Natural killer cell (primary cell): ENCODE measurements at regions of chr2 and their contacts with region 1.

Region 1: DNA sequence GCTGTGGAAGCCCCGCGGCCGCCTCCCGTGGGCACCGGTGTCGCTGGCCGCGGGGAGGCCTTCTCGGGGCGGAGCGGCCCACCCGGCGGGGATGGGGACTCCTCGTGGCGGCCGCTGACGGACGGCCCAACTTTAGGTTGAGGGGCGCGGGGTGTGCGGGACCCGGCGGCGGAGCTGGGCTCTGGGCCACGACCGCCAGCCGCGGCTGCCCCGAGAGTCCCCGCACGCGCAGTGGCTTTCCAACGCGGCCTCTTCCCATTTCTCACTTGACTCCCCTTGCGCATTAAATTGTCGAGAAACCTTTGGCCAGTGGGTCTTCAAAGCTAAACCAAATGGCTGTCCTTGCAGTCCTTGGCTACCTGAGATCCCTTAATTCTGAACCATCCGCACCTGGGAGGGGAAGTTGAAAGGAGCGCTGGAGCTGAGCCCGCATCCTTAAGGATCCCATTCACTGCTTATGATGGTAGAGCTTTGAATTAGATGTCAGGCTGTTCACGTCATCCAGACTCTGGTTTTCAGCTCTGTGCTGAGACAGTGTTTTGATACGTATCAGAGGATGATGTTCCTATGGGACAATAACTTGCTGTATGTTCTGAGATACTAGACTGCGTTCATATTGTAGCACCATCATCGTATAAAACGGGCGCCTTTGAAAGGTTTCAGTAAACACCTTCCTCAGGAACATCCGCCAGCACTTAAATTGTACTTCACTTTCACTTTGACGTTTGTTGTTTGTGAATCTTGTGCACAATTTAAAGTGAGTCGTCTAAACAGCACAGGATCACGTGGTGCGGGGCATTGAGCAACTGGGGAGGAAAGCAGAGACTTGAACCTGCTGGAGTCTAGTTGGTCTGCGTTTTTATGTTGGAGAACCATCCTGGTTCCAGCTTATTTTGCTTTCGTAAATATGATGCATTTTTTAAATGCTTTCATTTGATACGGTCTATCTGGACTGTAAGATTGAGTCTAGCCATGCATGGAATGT is 874 bp downstream of the CLIP4 start:
- DNase-seq: peak; percentile 65 to 86
- ATAC-seq: peak; percentile 51 to 64 (median 59)
- H3K4me3 ChIP-seq: peak overlapping the region; percentile 88
- H3K4me3 Mint-ChIP-seq: peak overlapping the region; percentile 91
- H3K27ac ChIP-seq: peak overlapping the region; percentile 95
- H3K27ac Mint-ChIP-seq: peak overlapping the region; percentile 93
- H3K4me1 ChIP-seq: peaks cover 14% of the 10 kb centered on the region
- H3K4me1 Mint-ChIP-seq: peaks cover 45 to 59% of the 10 kb centered on the region in 2 donors
- H3K27me3 ChIP-seq: no peaks in the 10 kb centered on the region
- H3K27me3 Mint-ChIP-seq: peaks cover 0 to 9% of the 10 kb centered on the region in 2 donors
- CTCF ChIP-seq: no peak

Region 2: DNA sequence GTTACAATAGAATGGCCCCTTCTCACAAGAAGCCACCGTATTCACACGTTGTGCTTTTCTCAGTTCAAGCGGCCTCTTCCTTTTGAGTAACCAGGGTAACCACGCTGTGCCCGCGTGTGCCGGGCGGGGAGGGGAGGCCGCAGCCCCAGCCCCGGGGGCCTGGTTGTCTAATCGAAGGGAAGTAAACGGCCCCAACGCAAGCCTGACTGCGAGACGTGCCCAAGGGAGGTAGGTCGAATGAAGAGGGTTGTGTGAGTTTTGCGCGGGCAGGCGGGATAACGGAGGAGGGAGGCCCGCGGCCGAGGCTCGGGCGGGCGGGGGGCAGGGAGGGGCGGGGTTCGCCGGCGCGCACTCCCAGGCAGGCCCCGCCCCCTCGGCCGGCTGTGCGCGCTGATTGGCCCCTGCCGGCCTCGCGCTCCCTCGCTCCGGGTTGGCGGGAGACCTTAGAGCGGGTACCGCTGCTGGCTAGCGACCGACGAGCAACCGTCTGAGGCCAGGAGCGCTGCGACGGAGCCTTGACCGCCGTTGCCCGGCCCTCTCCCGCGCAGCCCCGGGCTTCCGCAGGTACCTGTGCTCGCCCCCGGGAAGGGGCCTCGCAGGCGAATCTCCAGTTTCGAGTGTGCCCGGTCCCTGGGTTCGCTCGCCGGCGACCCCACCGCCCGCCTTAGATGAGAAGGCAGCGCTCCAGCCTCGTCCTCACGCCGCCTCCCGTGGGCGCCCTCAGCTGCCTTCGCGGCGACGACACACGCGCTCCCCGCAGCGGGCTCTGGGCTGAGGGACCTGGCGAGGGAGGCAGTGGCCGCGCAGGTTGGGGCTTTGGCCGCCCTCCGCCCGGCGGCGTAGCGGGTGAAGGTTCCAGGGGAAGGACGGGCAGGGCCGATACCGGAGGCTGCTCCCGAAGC is 305.5 kb before region 1 on chr2 and contains the start of gene SPDYA:
- intact Hi-C with region 1: loop called (anchors 10 kb)
- DNase-seq: peak; percentile 83 to 89
- ATAC-seq: peak; percentile 88 to 95 (median 90)
- H3K4me3 ChIP-seq: peak within 1 kb of the TSS; percentile 55
- H3K4me3 Mint-ChIP-seq: peak within 1 kb of the TSS; percentile 89
- H3K27ac ChIP-seq: peak within 1 kb of the TSS; percentile 61
- H3K27ac Mint-ChIP-seq: peak within 1 kb of the TSS; percentile 81 to 92
- H3K4me1 ChIP-seq: peaks cover 18% of the 10 kb centered on the region
- H3K4me1 Mint-ChIP-seq: peaks cover 14 to 15% of the 10 kb centered on the region in 2 donors
- H3K27me3 ChIP-seq: no peaks in the 10 kb centered on the region
- H3K27me3 Mint-ChIP-seq: no peaks in the 10 kb centered on the region
- CTCF ChIP-seq: no peak
- total RNA-seq, gene SPDYA: 5.6 to 8.1 (median 8.0) TPM

Region 3: GRCh38 chr2:28958689-28959088 is 157.4 kb before region 1 on chr2:
- intact Hi-C with region 1: loop called (anchors 5 kb)
- DNase-seq: peak; percentile 25 to 78
- ATAC-seq: peak; percentile 63 to 94 (median 74)
- H3K4me3 ChIP-seq: no peak overlapping the region
- H3K4me3 Mint-ChIP-seq: no peak overlapping the region
- H3K27ac ChIP-seq: no peak overlapping the region
- H3K27ac Mint-ChIP-seq: peak overlapping the region in 1 of 2 donors; percentile 25
- H3K4me1 ChIP-seq: peaks cover 6% of the 10 kb centered on the region
- H3K4me1 Mint-ChIP-seq: peaks cover 6 to 12% of the 10 kb centered on the region in 2 donors
- H3K27me3 ChIP-seq: no peaks in the 10 kb centered on the region
- H3K27me3 Mint-ChIP-seq: peaks cover 0 to 3% of the 10 kb centered on the region in 2 donors
- CTCF ChIP-seq: peak; percentile 82

Region 4: DNA sequence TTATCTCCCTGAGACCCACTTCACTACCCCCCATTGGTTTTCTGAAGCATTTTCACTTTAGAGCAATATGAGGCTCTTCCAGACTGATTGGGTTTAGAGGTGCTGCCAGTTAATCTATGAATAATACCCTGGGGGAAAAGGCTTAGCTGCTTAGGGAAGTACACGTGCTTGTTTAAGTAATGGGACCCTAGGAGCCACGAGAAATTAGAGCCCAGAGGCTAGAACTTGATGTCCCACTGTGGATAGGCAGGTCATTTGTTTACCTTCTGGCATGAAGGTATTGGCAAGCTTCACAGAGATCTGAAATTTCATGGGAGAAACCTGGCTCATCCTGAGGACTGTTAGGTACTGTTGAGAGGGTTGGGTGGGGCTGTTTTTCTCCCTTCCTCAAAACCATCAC is 58.8 kb after region 1 on chr2:
- intact Hi-C with region 1: no loop called
- DNase-seq: no peak
- ATAC-seq: no peak
- H3K4me3 ChIP-seq: no peak overlapping the region
- H3K4me3 Mint-ChIP-seq: no peak overlapping the region
- H3K27ac ChIP-seq: no peak overlapping the region
- H3K27ac Mint-ChIP-seq: peak overlapping the region in 1 of 2 donors; percentile 5
- H3K4me1 ChIP-seq: no peaks in the 10 kb centered on the region
- H3K4me1 Mint-ChIP-seq: peaks cover 11 to 15% of the 10 kb centered on the region in 2 donors
- H3K27me3 ChIP-seq: no peaks in the 10 kb centered on the region
- H3K27me3 Mint-ChIP-seq: no peaks in the 10 kb centered on the region
- CTCF ChIP-seq: no peak